ENCODE measurements at regions of chr7 and their contacts with region 1.

Region 1: GRCh38 chr7:39517240-39517639 is 49.0 kb upstream of the YAE1 start:
- H3K4me3 Mint-ChIP-seq: no peak overlapping the region
- H3K27ac Mint-ChIP-seq: no peak overlapping the region
- H3K4me1 Mint-ChIP-seq: no peaks in the 10 kb centered on the region
- H3K27me3 Mint-ChIP-seq: no peaks in the 10 kb centered on the region

Region 2: GRCh38 chr7:39453743-39454355 is 63.4 kb before region 1 on chr7:
- intact Hi-C with region 1: loop called (anchors 1 kb)
- H3K4me3 Mint-ChIP-seq: no peak overlapping the region
- H3K27ac Mint-ChIP-seq: no peak overlapping the region
- H3K4me1 Mint-ChIP-seq: no peaks in the 10 kb centered on the region
- H3K27me3 Mint-ChIP-seq: no peaks in the 10 kb centered on the region

Region 3: GRCh38 chr7:39527296-39527695 is 10.1 kb after region 1 on chr7:
- intact Hi-C with region 1: no loop called
- H3K4me3 Mint-ChIP-seq: no peak overlapping the region
- H3K27ac Mint-ChIP-seq: no peak overlapping the region
- H3K4me1 Mint-ChIP-seq: no peaks in the 10 kb centered on the region
- H3K27me3 Mint-ChIP-seq: no peaks in the 10 kb centered on the region